Panc1 (cell line): ENCODE measurements at regions of chr11 and their contacts with region 1.

Region 1: DNA sequence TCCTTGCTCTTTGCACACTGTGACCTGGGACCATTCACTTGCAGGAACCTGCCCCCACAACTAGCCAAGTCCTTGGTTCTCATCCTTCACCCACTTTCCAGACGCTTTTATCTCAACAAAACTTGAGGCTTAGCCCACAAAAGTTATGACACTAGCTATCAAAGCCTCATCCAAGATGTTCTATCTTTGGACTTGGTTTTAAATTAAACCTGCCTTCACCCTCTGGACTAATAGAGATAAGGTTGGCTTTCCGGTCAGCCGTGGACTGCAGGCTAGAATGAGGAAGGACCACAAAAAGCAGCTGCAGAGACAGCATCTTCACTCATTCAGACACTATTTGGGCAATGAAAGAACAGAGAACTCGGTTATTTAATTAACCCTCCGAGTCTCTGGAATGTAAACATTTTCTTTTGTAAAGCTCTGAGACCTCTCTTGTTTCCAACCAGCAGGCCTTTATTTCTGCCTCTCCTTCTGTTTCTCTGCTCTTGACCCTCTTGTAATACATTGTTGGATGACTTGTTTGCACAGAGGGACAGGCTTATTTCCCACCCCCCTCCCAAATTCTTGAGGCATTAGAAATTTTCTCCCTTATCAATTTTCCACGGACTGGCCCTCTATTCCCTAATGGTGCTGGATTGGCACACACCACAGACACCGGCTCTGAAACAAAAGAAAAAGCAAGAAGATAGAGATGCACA is 41.4 kb downstream of the ARL14EP start:
- DNase-seq: no peak
- ATAC-seq: no peak
- H3K4me3 ChIP-seq: no peak overlapping the region
- H3K27ac ChIP-seq: no peak overlapping the region
- H3K4me1 ChIP-seq: no peaks in the 10 kb centered on the region
- H3K27me3 ChIP-seq: no peaks in the 10 kb centered on the region
- CTCF ChIP-seq: no peak

Region 2: DNA sequence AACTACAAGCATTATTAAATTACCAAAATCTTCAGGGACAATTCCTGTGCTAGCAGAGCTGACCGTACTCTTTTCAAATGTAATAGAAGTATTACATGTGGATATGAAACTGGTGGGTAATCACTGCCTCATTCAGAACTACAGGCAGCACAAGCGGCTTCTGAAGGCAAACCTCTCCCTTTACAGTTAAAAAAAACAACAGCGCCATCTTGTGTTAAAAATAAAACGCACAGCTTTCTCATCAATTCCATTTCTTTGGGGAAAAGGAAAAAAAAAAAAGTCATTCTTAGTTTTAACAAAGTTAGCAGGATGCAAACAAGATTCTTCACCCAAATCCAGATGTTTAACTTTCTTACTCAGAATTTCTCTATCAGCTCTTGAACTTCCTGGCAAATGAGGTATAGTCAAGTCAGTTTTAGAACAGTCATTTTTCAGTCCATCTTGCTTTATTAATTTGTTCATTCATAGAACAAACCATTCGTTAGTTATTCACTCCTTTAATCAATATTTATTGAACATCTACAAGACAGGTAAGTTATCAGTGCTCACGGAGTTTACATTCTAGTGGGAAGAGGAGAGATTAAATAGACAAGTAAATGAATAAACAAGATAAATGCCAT is 553.7 kb after region 1 on chr11:
- CTCF ChIA-PET with region 1: no interaction called
- POLR2A ChIA-PET with region 1: no interaction called
- in situ Hi-C with region 1: no loop called
- intact Hi-C with region 1: loop called (anchors 5 kb)
- DNase-seq: peak; percentile 17
- ATAC-seq: peak; percentile 73; the same call in 1 of the 2 replicates
- H3K4me3 ChIP-seq: no peak overlapping the region
- H3K27ac ChIP-seq: no peak overlapping the region
- H3K4me1 ChIP-seq: no peaks in the 10 kb centered on the region
- H3K27me3 ChIP-seq: no peaks in the 10 kb centered on the region; the same call in 1 of the 2 replicates
- CTCF ChIP-seq: peak; percentile 69; the same call in 1 of the 2 replicates